Posterior vena cava (tissue), 2 donors: ENCODE measurements at regions of chr6 and their contacts with region 1.

Region 1: DNA sequence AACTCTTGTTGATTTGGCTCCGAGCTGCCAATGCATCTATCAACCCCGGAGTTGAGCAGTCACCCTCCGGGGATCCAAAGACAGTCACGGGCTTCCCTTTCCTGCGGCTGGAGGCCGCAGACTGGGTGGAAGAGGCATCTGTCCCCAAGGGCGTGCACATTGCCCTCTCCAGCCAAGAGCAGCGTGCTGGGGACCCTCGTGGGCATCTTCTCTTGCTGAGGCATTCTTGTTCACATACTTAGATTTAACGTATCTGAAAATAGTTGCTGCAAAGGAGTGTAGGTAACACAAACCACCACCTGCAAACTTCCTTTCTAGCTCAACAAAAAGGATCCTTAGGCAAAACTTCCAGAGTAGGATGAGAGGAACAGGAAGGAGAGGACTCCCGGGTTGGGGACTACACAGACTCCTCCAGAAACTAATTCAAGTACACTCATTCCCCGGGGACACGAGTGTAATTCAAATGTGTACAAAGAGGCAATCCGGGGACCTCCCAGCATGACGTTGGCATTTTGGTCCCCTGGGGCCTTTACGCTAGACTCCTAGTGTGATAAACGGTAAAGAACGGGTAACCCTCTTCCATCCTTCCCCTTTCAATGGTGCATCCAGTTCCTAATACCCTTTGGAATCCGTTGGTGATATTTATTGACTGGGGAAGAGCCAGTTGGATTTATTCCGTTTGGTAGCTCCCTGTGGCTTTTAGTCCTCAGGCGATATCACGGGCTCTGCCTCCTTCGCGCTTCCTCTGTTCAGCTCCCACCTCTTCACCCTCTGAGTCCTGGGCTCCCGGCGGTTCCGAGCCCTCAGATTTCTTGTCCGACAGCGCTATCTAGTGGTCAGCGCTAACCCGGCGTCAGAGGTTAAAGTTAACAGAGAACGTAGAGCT is 2.7 kb upstream of the COL12A1 start:
- DNase-seq: peak; percentile 94

Region 2: GRCh38 chr6:73732845-73733675 is 1475.5 kb before region 1 on chr6:
- intact Hi-C with region 1: loop called (anchors 10 kb)
- DNase-seq: peak; percentile 79

Region 3: DNA sequence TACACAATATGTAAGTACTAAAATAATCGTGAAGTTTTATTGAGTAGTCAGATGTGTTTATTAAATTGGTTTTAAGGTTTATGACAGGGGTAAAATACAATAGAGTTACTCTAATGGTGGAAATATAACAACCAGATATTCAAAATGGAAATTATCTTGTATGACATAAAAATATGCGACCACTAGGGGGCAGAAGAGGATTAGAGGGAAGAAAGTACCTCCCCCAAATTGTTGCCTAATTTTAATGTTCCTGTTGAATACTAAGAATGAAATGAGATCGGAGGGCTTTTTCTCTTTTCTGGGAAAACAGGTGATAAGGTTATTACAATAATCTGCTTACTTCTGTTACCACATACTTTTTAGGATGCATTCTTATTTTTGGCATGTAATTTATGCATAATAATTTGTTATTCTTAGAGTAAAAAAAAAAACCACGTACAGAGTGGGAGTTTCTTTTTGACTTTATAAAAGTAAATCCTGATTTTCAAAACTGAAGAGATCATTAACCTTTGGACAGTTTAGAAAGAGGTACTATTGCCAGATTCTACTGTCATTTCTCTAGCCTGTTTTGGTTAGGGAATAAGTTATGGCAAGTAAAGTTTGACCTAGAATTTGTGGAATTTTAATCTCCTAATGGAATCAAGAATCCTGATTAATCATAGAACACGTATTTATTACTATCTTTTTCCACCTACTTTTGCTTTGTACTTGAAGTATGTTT is 1353.4 kb before region 1 on chr6:
- intact Hi-C with region 1: loop called (anchors 2 to 10 kb)
- DNase-seq: no peak

Region 4: GRCh38 chr6:73969971-73970970 is 1238.3 kb before region 1 on chr6:
- intact Hi-C with region 1: loop called in 1 of 2 experiments (anchors 10 kb)
- DNase-seq: no peak

Region 5: DNA sequence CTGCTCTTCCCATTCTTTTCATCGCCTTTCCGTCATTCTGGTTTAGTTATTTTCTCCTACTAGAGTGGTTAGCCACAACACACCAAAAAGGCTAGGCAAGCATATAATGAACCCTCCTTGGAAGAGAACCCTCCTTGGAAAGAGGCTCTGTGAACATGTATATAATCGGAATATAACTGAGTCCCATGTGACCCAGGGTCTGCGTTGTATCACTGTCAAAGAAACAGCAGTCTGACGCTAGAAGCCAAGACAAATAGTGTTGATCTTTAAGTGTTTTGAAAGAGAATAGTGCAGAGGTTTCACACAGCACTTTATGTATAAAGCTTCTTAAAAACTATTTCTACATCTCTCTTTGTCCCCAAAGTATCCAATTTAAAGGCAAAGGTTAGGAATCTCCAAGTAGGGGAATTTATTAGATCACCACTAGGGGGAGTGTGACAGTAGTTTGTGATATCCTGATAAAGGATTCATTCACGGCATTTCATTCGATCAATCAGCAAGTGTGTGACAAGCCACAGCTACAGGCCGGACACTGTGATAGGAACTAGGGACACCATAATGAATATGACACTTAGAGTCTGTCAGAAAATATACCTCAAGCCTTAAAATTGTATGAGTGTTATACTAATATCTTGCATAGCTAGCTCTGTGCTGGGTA is 1117.3 kb before region 1 on chr6:
- intact Hi-C with region 1: loop called in 1 of 2 experiments (anchors 10 kb)
- DNase-seq: no peak

Region 6: GRCh38 chr6:74410630-74411029 is 797.9 kb before region 1 on chr6:
- intact Hi-C with region 1: loop called (anchors 5 to 10 kb)
- DNase-seq: no peak

Region 7: GRCh38 chr6:75220357-75220756 is 11.8 kb after region 1 on chr6:
- intact Hi-C with region 1: no loop called
- DNase-seq: no peak

Region 8: DNA sequence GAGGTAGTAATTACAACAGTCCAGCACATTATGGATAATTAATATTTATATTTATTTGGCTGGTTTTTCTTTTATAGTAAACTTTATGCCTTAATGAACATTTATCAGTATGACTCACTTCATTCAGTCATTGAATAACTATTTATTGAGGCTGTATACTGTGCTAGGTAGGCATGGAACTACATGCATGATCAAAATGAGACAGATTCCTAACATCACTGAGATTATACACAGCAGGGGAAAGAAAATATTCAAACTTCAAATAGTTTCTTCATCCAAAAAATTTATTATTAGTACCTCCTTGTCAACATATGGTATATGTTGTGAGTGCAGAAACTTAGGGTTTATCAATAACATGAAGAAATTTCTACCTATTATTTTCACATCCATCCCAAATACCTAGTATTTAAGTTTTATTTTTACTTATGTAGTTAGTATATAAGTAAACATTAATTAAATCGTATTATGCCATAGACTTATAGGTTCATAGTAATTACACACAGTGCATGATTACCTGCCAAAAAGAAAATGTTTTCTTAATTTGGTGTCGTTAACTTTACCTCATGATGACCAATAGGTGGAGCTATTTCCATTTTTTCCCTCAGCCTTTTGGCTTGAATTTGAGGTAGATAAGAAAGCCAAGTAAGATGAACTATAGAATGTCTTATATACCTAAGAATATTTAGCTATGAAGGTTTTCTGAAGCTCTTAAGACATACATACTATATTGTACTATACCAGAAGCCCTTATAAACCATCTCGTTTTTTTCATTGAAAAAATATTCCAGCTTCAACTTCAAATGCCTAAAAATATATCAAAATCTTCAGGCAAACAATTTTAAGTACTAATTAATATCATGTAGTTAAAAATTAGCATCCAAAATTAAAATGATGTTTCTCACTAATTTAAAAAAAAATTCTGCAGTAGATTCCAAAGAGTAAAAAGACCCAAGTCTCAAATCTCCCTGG is 88.6 kb after region 1 on chr6:
- intact Hi-C with region 1: no loop called
- DNase-seq: no peak